ENCODE measurements at regions of chr19 and their contacts with region 1.

Region 1: DNA sequence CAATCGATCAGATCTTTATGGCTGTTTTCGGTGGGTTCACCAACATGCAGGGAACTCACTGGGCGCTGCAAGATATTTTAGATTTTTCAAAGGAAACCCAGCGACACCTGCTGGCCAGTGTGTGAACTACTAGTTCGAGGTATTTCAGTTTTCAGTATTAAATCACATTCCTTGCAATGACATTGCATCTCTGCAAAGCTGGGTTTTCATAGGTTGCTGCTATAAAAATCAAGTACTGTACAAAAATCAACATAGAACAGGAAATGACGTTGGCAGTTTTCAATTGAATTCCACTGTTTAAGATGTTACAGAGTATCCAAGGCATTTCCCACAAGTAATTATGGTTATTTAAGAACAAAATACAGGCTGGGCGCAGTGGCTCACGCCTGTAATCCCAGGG is 17.6 kb downstream of the LIG1 start:
- DNase-seq: peak; percentile 62 to 72
- H3K4me3 ChIP-seq: no peak overlapping the region
- H3K27ac ChIP-seq: no peak overlapping the region
- H3K4me1 ChIP-seq: no peaks in the 10 kb centered on the region
- H3K27me3 ChIP-seq: no peaks in the 10 kb centered on the region
- CTCF ChIP-seq: peak; percentile 82 to 90

Region 2: GRCh38 chr19:48110350-48110966 is 42.1 kb before region 1 on chr19 and contains the start of gene PLA2G4C:
- intact Hi-C with region 1: loop called (anchors 1 kb)
- DNase-seq: peak; percentile 87 to 96
- H3K4me3 ChIP-seq: peak within 1 kb of the TSS; percentile 53 to 63
- H3K27ac ChIP-seq: peak within 1 kb of the TSS; percentile 95 to 97
- H3K4me1 ChIP-seq: peaks cover 0 to 33% (median 16%) of the 10 kb centered on the region in 4 donors
- H3K27me3 ChIP-seq: no peaks in the 10 kb centered on the region
- CTCF ChIP-seq: peak in 1 of 2 experiments; percentile 11

Region 3: DNA sequence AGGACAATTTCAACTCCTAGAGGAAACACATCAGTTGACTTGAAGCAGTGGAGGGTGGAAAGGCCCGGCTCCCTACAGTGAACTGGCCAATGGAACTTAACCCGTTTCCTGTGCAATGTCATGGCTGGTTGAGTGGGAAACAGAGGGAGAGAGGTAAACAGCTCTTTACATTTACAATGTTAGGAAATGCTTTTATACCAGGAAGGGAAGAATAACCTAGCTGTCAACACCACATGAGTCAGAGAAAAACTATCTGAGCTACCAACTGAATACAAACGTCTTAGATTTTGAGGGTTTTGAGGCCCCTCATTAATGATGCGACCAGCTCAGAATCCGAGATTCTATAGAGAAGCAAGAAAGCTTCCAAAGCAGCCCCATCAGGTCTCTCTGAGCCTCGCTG is 66.4 kb after region 1 on chr19:
- intact Hi-C with region 1: no loop called
- DNase-seq: no peak
- H3K4me3 ChIP-seq: no peak overlapping the region
- H3K27ac ChIP-seq: no peak overlapping the region
- H3K4me1 ChIP-seq: no peaks in the 10 kb centered on the region
- H3K27me3 ChIP-seq: no peaks in the 10 kb centered on the region
- CTCF ChIP-seq: no peak

Measured in tibial artery (tissue), 4 donors.